ENCODE measurements at regions of chr20 and their contacts with region 1.

Region 1: DNA sequence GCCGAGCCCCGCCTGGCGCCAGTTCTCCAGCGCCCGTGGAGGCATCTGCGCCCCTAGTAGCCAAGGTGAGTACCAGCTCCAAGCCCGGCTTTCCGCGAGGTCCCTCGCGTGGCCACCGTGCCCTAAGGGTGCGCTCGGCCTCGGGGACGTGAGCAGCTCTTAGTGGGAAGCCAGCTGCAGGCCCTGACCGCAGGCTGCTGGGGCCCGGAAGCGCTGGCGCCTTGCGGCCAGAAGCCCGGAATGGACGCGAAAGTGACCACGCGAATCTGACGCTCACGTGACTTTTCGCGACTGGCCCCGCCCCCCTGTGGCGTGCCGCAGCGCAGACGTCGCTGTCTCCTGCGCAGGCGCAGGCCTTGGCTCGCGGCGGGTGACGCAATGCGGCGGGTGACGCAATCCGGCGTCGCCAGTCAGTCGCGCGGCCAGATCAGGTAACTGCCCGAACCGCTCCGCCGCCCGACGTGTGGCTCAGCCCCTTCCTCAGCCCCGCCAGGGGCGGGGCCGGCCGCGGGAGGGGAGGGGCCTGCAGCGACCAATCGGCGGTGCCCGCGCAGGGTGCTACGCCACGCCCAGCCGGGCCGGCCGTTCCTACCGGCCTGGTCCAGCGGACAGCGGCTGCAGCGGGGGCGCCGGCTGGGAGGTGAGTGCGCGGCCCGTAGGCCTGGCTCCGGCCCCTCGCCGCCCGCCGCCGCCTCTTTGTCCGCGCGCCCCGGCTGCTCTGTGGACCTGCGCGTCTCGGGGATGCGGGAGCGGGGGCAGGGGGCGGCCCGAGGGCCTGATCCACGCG is at the start of gene GZF1:
- DNase-seq: peak; percentile 90 to 96 (median 92)
- ATAC-seq: peak; percentile 85
- H3K4me3 ChIP-seq: peak within 1 kb of the TSS; percentile 86
- H3K27ac ChIP-seq: peak within 1 kb of the TSS; percentile 99
- H3K4me1 ChIP-seq: peaks cover 31 to 38% of the 10 kb centered on the region in 2 experiments
- H3K27me3 ChIP-seq: no peaks in the 10 kb centered on the region
- CTCF ChIP-seq: peak in 1 of 3 experiments; percentile 6; a peak in 1 of 6 replicates
- EP300 ChIP-seq: peak; percentile 41; the same call in 1 of the 2 replicates
- POLR2A ChIP-seq: peak; percentile 92
- RAD21 ChIP-seq: no peak
- polyA plus RNA-seq, gene GZF1: 1.2 to 1.8 TPM

Region 2: DNA sequence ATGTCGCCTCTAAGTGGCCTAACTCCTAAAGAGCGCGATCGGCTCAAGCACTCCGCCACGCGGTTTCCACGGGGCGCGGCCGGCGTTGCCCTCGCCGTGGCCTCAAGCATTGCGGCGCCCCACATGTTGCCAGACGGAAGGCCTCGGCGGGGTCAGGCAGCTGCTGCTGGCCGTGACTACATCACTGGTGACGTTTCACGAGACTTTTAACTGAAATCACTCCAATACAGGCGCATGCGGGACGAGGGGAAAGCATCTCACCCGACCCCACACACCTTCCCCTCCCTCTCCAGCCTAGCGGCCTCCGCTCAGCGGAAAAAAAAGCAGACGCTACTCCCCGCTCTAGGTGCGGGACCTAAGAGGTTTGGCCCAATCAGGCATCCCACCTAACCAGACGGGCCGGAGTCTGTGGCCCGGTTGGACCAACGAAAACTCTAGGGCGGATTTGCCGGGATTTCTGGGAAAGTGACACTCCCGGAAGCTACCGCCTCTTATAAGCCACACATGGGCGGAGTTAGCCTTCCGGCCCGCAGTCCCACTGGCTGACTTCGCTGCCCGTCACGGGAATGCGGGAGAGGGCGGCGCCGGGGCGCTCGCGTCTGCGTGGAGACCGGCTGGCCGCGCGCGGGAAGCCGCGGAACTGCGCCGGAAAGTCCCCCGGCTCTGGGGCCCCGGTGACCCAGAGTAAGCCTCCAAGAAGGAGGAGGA is 11.4 kb before region 1 on chr20 and contains the start of gene NXT1:
- CTCF ChIA-PET with region 1: no interaction called
- POLR2A ChIA-PET with region 1: interaction called, 7 read pairs
- in situ Hi-C with region 1: no loop called
- intact Hi-C with region 1: loop called (anchors 1 kb)
- DNase-seq: peak; percentile 79 to 95 (median 86)
- ATAC-seq: peak; percentile 97
- H3K4me3 ChIP-seq: peak within 1 kb of the TSS; percentile 95
- H3K27ac ChIP-seq: peak within 1 kb of the TSS; percentile 95
- H3K4me1 ChIP-seq: peaks cover 9 to 12% of the 10 kb centered on the region in 2 experiments; a peak in 4 of 5 replicates
- H3K27me3 ChIP-seq: no peaks in the 10 kb centered on the region
- CTCF ChIP-seq: peak in 2 of 3 experiments; percentile 5; a peak in 2 of 6 replicates
- EP300 ChIP-seq: no peak
- POLR2A ChIP-seq: peak; percentile 82
- RAD21 ChIP-seq: no peak
- polyA plus RNA-seq, gene NXT1: 7.7 to 8.9 TPM

Region 3: GRCh38 chr20:23412026-23412425 is 50.2 kb after region 1 on chr20:
- CTCF ChIA-PET with region 1: no interaction called
- POLR2A ChIA-PET with region 1: no interaction called
- in situ Hi-C with region 1: no loop called
- intact Hi-C with region 1: loop called (anchors 5 kb)
- DNase-seq: no peak
- ATAC-seq: peak; percentile 80
- H3K4me3 ChIP-seq: no peak overlapping the region
- H3K27ac ChIP-seq: no peak overlapping the region
- H3K4me1 ChIP-seq: peaks cover 0 to 8% of the 10 kb centered on the region in 2 experiments; a peak in 3 of 5 replicates
- H3K27me3 ChIP-seq: no peaks in the 10 kb centered on the region
- CTCF ChIP-seq: no peak
- EP300 ChIP-seq: no peak
- POLR2A ChIP-seq: no peak
- RAD21 ChIP-seq: no peak

Region 4: DNA sequence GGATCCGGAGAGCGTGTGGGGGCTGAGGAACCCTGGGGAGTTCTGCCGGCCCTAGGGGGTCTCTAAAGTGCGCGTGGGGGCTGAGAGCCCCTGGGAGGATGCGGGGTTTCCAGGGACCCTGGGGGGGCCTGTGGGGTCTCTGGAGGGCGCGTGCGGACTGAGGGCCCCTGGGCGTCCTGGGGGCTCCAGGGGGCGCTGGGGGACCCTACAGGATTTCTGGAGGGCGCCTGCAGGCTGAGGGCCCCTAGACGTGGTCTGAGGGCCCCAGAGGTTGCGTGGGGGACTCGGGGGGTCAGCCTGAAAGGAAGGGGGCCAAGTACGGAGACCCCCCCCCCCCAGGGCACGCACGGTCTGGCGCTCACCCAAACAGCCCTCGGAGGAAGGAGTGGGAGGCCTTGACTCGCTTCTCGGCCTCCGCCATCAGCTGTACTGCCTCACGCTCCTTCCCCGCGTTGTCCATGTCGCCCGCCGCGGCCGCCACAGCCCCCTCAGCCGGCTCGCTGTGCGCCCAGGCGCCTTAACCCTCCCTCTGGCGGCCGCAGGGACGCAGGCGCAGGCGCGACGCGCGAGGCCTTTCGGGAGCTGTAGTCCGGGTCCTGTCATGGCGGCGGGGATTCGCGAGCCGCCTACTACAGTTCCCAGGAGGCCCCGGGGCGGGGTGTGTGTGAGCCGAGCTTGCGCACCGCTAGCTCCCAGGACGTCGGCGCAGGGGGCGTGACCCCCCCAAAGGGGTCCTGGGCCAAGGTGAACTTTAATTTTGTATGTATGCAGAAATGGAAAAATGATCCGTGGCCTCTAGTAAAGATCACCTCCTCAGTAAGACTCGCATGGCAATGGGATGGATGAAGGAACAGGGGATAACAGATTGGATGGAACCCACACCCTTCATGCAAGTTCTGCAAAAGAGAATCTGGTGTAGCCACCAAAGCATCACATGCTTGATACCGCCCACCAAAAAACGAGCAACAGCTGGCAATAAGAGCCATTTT is 59.4 kb after region 1 on chr20 and contains the start of gene NAPB:
- CTCF ChIA-PET with region 1: no interaction called
- POLR2A ChIA-PET with region 1: interaction called, 4 read pairs
- in situ Hi-C with region 1: no loop called
- intact Hi-C with region 1: loop called (anchors 5 kb)
- DNase-seq: peak; percentile 84 to 94 (median 85)
- ATAC-seq: peak; percentile 98
- H3K4me3 ChIP-seq: peak within 1 kb of the TSS; percentile 84
- H3K27ac ChIP-seq: peak within 1 kb of the TSS; percentile 86
- H3K4me1 ChIP-seq: peaks cover 7 to 14% of the 10 kb centered on the region in 2 experiments; a peak in 4 of 5 replicates
- H3K27me3 ChIP-seq: no peaks in the 10 kb centered on the region
- CTCF ChIP-seq: peak; percentile 15 to 47 (median 17); a peak in 3 of 6 replicates
- EP300 ChIP-seq: no peak
- POLR2A ChIP-seq: peak; percentile 79
- RAD21 ChIP-seq: no peak
- polyA plus RNA-seq, gene NAPB: 1.4 to 2.3 TPM